ENCODE measurements at regions of chr10 and their contacts with region 1.

Region 1: GRCh38 chr10:47047671-47048525 is 136.7 kb downstream of the PTPN20 start:
- DNase-seq: peak; percentile 88
- ATAC-seq: peak; percentile 76
- H3K4me3 Mint-ChIP-seq: no peak overlapping the region
- H3K27ac Mint-ChIP-seq: peak overlapping the region; percentile 31
- H3K4me1 Mint-ChIP-seq: peaks cover 20% of the 10 kb centered on the region
- H3K27me3 Mint-ChIP-seq: no peaks in the 10 kb centered on the region
- CTCF ChIP-seq: peak; percentile 90

Region 2: GRCh38 chr10:47030191-47030703 is 17.7 kb before region 1 on chr10:
- CTCF ChIA-PET with region 1: interaction called, 32 read pairs
- POLR2A ChIA-PET with region 1: interaction called, 7 read pairs
- intact Hi-C with region 1: no loop called
- DNase-seq: no peak
- ATAC-seq: no peak
- H3K4me3 Mint-ChIP-seq: no peak overlapping the region
- H3K27ac Mint-ChIP-seq: no peak overlapping the region
- H3K4me1 Mint-ChIP-seq: no peaks in the 10 kb centered on the region
- H3K27me3 Mint-ChIP-seq: no peaks in the 10 kb centered on the region
- CTCF ChIP-seq: no peak

Region 3: GRCh38 chr10:47076949-47077361 is 29.1 kb after region 1 on chr10:
- CTCF ChIA-PET with region 1: interaction called, 22 read pairs
- POLR2A ChIA-PET with region 1: interaction called, 3 read pairs
- intact Hi-C with region 1: no loop called
- DNase-seq: peak; percentile 45
- ATAC-seq: peak; percentile 59
- H3K4me3 Mint-ChIP-seq: no peak overlapping the region
- H3K27ac Mint-ChIP-seq: peak overlapping the region; percentile 18
- H3K4me1 Mint-ChIP-seq: peaks cover 52% of the 10 kb centered on the region
- H3K27me3 Mint-ChIP-seq: no peaks in the 10 kb centered on the region
- CTCF ChIP-seq: no peak

Region 4: DNA sequence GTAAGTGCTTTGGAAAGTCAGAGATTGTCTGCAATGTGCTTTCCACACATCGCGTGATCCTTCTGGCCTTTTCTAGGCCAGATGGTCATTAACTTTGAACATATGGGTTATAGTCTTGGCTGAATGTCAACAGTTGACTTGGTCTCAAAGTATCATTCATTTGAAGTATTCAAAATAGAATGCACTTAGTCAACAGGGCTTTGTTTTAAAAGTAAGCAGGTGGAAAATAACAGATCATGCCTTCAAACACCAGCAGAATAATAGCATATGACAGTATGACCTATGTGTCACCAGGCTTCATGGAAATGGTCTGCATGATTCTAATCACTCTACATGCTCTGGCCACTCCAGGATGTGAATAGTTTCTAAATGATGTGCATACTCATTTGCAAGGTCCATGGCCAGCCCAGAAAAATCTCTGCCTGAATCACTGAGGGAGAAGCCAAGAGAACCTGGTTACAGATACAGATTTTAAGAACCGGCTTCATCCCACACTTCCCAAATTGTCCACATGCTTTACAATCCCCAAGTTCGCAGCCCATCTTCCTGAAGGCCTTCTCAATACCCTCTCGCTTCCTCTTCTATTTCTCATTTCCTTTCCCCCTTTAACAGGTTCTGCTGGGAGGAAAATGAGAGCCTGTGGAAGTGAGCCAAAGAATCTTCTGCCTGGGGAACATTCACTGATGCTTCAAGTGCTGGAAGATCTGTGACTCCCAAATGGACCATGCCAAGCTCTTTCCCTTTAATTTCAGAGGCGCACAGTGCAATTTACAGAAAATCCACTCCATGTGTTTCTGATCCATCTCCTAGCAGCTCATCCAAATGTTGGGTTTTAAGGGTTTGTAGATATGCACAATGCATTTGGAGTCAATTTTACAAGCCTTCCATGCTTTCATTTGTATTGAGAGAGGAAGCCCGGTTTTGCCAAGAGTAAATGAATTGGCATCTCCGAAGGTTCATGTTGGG is 129.3 kb after region 1 on chr10:
- CTCF ChIA-PET with region 1: interaction called, 10 read pairs
- POLR2A ChIA-PET with region 1: no interaction called
- intact Hi-C with region 1: no loop called
- DNase-seq: no peak
- ATAC-seq: peak; percentile 68
- H3K4me3 Mint-ChIP-seq: no peak overlapping the region
- H3K27ac Mint-ChIP-seq: no peak overlapping the region
- H3K4me1 Mint-ChIP-seq: peaks cover 8% of the 10 kb centered on the region
- H3K27me3 Mint-ChIP-seq: no peaks in the 10 kb centered on the region
- CTCF ChIP-seq: no peak

Region 5: DNA sequence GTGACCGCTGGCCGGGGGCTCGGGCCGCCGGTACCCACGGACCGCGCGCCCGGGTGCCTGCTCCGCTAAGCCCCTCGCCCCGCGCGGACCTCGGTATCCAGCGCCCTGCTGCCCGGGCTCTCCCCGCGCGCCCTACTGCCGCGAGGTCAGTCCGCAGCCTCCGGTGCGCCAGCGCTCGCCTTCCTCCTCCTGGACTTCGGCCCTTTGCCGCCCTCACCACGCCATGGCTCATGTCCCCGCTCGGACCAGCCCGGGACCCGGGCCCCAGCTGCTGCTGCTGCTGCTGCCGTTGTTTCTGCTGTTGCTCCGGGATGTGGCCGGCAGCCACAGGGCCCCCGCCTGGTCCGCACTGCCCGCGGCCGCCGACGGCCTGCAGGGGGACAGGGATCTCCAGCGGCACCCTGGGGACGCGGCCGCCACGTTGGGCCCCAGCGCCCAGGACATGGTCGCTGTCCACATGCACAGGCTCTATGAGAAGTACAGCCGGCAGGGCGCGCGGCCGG is 252.6 kb after region 1 on chr10:
- CTCF ChIA-PET with region 1: interaction called, 16 read pairs
- POLR2A ChIA-PET with region 1: no interaction called
- intact Hi-C with region 1: no loop called
- DNase-seq: no peak
- ATAC-seq: peak; percentile 20
- H3K4me3 Mint-ChIP-seq: peak overlapping the region; percentile 76
- H3K27ac Mint-ChIP-seq: no peak overlapping the region
- H3K4me1 Mint-ChIP-seq: peaks cover 15% of the 10 kb centered on the region
- H3K27me3 Mint-ChIP-seq: peaks cover 7% of the 10 kb centered on the region
- CTCF ChIP-seq: no peak

Region 6: GRCh38 chr10:47326306-47326926 is 278.5 kb after region 1 on chr10:
- CTCF ChIA-PET with region 1: interaction called, 13 read pairs
- POLR2A ChIA-PET with region 1: no interaction called
- intact Hi-C with region 1: no loop called
- DNase-seq: no peak
- ATAC-seq: no peak
- H3K4me3 Mint-ChIP-seq: no peak overlapping the region
- H3K27ac Mint-ChIP-seq: no peak overlapping the region
- H3K4me1 Mint-ChIP-seq: no peaks in the 10 kb centered on the region
- H3K27me3 Mint-ChIP-seq: no peaks in the 10 kb centered on the region
- CTCF ChIP-seq: no peak

Measured in activated CD8-positive, alpha-beta T cell treated with anti-CD3 and anti-CD28 coated beads for 36 hours (primary cell).